Activated B cell treated with CpG ODN at 0.5 μM for 24 hours (primary cell): ENCODE measurements at regions of chr10 and their contacts with region 1.

Region 1: DNA sequence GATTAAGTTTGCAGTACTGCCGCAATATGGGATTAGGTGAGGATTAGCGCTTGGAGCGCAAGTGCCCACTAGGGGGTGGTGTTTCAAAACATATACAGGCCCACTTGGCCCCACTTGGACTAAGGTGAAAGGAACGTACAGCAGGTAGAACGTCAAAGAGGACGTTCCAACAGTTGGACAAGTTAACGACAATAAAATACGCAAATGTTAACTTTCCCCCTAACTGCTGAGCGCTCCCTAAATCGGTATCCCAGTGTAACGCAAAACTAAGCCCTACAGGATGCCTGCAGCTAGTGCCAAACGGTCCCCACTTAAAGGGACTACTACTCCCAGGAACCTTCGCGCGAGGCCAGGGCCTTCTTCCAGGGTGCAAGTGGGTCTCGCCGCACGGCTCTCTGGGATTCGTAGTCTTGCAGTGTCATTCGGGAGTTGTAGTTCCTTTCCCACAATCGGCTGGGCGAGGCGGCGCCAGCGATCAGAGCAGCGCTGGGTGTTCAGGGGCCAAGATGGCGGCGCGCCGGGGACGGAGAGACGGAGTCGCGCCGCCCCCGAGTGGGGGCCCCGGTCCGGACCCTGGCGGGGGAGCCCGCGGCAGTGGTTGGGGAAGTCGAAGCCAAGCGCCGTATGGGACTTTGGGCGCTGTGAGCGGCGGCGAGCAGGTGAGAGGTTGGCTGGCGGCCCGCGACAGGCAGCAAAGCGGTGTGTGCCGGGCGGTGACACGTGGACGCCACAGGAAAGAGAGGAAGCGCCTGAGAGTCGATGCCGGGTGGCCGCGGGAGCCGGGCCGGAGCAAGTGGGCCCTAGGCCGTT is at the start of gene PPRC1:
- DNase-seq: peak; percentile 89
- ATAC-seq: peak; percentile 93
- H3K4me3 Mint-ChIP-seq: peak within 1 kb of the TSS; percentile 99
- H3K27ac Mint-ChIP-seq: peak within 1 kb of the TSS; percentile 98
- H3K4me1 Mint-ChIP-seq: peaks cover 41% of the 10 kb centered on the region
- H3K27me3 Mint-ChIP-seq: no peaks in the 10 kb centered on the region
- CTCF ChIP-seq: peak; percentile 81
- total RNA-seq, gene PPRC1: 65.1 and 77.2 TPM in 2 replicates

Region 2: GRCh38 chr10:101353692-101354327 is 779.0 kb before region 1 on chr10 and contains the start of gene BTRC:
- CTCF ChIA-PET with region 1: no interaction called
- POLR2A ChIA-PET with region 1: no interaction called
- intact Hi-C with region 1: loop called (anchors 1 kb)
- DNase-seq: peak; percentile 89
- ATAC-seq: peak; percentile 96
- H3K4me3 Mint-ChIP-seq: peak within 1 kb of the TSS; percentile 99
- H3K27ac Mint-ChIP-seq: peak within 1 kb of the TSS; percentile 90
- H3K4me1 Mint-ChIP-seq: peaks cover 24% of the 10 kb centered on the region
- H3K27me3 Mint-ChIP-seq: peaks cover 18% of the 10 kb centered on the region
- CTCF ChIP-seq: no peak
- total RNA-seq, gene BTRC: 11.8 and 19.4 TPM in 2 replicates

Region 3: DNA sequence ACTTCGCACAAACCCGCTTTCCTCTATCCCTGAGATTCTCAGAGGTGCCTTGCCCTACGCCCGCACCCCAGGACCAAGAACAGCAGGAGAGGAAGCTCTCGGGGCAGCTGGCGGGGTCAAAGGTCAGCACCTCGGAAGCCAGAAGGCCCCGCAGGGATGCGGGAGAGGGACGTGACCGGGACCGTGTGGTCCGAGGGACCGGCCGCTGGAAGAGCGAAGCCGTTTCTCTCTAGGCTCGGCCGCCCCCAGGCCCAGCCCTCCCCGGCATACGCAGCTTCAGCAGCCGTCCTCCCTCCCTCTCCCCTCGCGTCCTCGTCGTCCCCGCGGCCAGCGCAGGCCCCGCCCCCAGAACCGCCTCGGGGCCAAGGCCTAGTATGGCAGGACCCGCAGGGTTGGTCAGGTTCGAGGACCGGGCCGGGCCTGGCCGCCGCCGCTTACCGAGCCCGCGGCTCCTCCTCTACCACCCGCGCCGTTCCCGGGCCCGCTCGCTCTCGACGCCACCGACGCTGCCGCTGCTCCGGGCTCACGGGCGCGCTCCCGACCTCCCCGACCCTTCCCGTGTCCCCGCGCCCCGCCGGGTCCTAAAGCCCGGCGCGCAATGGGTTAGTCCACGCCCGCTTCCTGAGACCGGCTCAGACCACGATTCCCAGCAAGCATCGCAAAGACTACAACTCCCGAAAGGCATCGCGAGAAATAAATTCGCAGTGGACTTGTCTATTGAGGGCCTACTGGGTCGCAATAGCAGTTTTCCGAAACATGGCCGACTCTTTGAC is 76.9 kb before region 1 on chr10 and contains the start of gene ARMH3:
- CTCF ChIA-PET with region 1: no interaction called
- POLR2A ChIA-PET with region 1: interaction called, 4 read pairs
- intact Hi-C with region 1: loop called (anchors 1 kb)
- DNase-seq: peak; percentile 83
- ATAC-seq: peak; percentile 93
- H3K4me3 Mint-ChIP-seq: peak within 1 kb of the TSS; percentile 94
- H3K27ac Mint-ChIP-seq: peak within 1 kb of the TSS; percentile 91
- H3K4me1 Mint-ChIP-seq: peaks cover 45% of the 10 kb centered on the region
- H3K27me3 Mint-ChIP-seq: no peaks in the 10 kb centered on the region
- CTCF ChIP-seq: no peak
- total RNA-seq, gene ARMH3: 26.8 and 35.4 TPM in 2 replicates

Region 4: GRCh38 chr10:102120142-102120990 is 12.4 kb before region 1 on chr10 and contains the start of gene LDB1:
- CTCF ChIA-PET with region 1: interaction called, 13 read pairs
- POLR2A ChIA-PET with region 1: interaction called, 18 read pairs
- intact Hi-C with region 1: loop called (anchors 1 kb)
- DNase-seq: peak; percentile 73
- ATAC-seq: peak; percentile 67
- H3K4me3 Mint-ChIP-seq: peak within 1 kb of the TSS; percentile 94
- H3K27ac Mint-ChIP-seq: peak within 1 kb of the TSS; percentile 94
- H3K4me1 Mint-ChIP-seq: peaks cover 55% of the 10 kb centered on the region
- H3K27me3 Mint-ChIP-seq: no peaks in the 10 kb centered on the region
- CTCF ChIP-seq: no peak
- total RNA-seq, gene LDB1: 54.0 and 61.9 TPM in 2 replicates

Region 5: GRCh38 chr10:102167861-102168260 is 35.1 kb after region 1 on chr10:
- CTCF ChIA-PET with region 1: no interaction called
- POLR2A ChIA-PET with region 1: interaction called, 3 read pairs
- intact Hi-C with region 1: loop called (anchors 1 kb)
- DNase-seq: no peak
- ATAC-seq: no peak
- H3K4me3 Mint-ChIP-seq: no peak overlapping the region
- H3K27ac Mint-ChIP-seq: no peak overlapping the region
- H3K4me1 Mint-ChIP-seq: peaks cover 5% of the 10 kb centered on the region
- H3K27me3 Mint-ChIP-seq: no peaks in the 10 kb centered on the region
- CTCF ChIP-seq: no peak

Region 6: GRCh38 chr10:102352066-102352715 is 219.4 kb after region 1 on chr10:
- CTCF ChIA-PET with region 1: interaction called, 6 read pairs
- POLR2A ChIA-PET with region 1: no interaction called
- intact Hi-C with region 1: loop called (anchors 1 kb)
- DNase-seq: peak; percentile 45
- ATAC-seq: peak; percentile 70
- H3K4me3 Mint-ChIP-seq: no peak overlapping the region
- H3K27ac Mint-ChIP-seq: no peak overlapping the region
- H3K4me1 Mint-ChIP-seq: no peaks in the 10 kb centered on the region
- H3K27me3 Mint-ChIP-seq: no peaks in the 10 kb centered on the region
- CTCF ChIP-seq: peak; percentile 81